ENCODE measurements at regions of chr2 and their contacts with region 1.

Region 1: GRCh38 chr2:28392297-28393113 is at the start of gene FOSL2:
- DNase-seq: peak; percentile 97 to 98 (median 98)
- ATAC-seq: peak; percentile 66 to 85 (median 74)
- H3K4me3 ChIP-seq: peak within 1 kb of the TSS; percentile 82 to 100 (median 96)
- H3K27ac ChIP-seq: peak within 1 kb of the TSS; percentile 94 to 100 (median 100)
- H3K4me1 ChIP-seq: peaks cover 7 to 35% (median 24%) of the 10 kb centered on the region in 12 donors
- H3K27me3 ChIP-seq: no peaks in the 10 kb centered on the region
- CTCF ChIP-seq: peak in 1 of 12 donors; percentile 12
- POLR2A ChIP-seq: peak; percentile 84 to 99
- total RNA-seq, gene FOSL2: 26.2 to 144 (median 50.2) TPM

Region 2: GRCh38 chr2:27735263-27735953 is 657.1 kb before region 1 on chr2:
- intact Hi-C with region 1: loop called in 1 of 10 experiments (anchors 1 kb)
- DNase-seq: peak; percentile 87 to 95 (median 89)
- ATAC-seq: peak; percentile 74 to 96 (median 94)
- H3K4me3 ChIP-seq: peak overlapping the region; percentile 29 to 68 (median 56)
- H3K27ac ChIP-seq: peak overlapping the region; percentile 60 to 94 (median 86)
- H3K4me1 ChIP-seq: peaks cover 14 to 47% (median 35%) of the 10 kb centered on the region in 12 donors
- H3K27me3 ChIP-seq: no peaks in the 10 kb centered on the region
- CTCF ChIP-seq: peak in 1 of 12 donors; percentile 16
- POLR2A ChIP-seq: peak in 1 of 2 donors; percentile 61

Region 3: DNA sequence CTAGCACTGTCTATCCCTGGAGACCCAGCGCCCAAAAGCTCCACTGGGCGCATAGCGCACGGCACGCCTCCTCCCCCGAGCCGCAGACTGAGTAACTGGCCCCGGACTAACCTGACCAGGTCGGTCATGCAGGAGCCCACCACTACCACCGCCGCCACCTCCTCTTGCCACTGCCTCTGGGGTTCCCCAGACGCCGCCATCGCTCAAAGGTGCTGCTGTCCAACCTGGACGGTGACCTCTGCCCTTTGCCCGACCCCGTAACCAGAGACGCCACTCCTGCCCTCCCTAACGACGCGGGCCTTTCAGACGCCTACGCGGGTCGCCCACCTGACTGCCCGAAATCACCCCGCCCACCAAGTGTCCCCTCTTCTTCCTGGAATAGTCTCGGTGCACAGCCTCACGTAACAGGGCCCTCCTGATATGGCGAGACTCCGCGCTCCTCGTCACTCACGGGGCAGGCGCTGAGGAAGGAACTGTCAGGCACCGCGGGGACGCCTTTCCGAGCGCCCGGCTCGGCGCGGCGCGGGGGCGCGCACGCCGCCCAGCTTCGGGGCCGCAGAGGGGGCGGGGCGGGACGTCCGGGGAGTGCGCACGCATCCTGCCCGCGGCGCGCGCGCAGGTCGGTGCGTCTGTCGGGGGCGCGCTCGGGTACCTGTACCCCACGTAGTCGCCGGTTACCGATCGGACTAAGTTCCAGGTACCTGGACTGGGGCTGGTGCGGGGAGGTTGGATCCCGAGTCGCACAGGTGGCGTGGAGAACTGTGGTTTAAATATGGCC is 502.2 kb before region 1 on chr2 and contains the starts of genes BABAM2 and RBKS:
- intact Hi-C with region 1: loop called in 8 of 10 experiments (anchors 1 to 5 kb)
- DNase-seq: peak; percentile 87 to 93 (median 91)
- ATAC-seq: peak; percentile 87 to 98 (median 94)
- H3K4me3 ChIP-seq: peak within 1 kb of the TSS; percentile 57 to 94 (median 80)
- H3K27ac ChIP-seq: peak within 1 kb of the TSS; percentile 85 to 99 (median 94)
- H3K4me1 ChIP-seq: peaks cover 0 to 54% (median 22%) of the 10 kb centered on the region in 12 donors
- H3K27me3 ChIP-seq: no peaks in the 10 kb centered on the region
- CTCF ChIP-seq: peak in 1 of 12 donors; percentile 9
- POLR2A ChIP-seq: peak in 1 of 2 donors; percentile 72
- total RNA-seq, gene BABAM2: 55.1 to 75.1 (median 64.4) TPM
- total RNA-seq, gene RBKS: 2.0 to 6.0 (median 4.1) TPM

Region 4: GRCh38 chr2:28096421-28096820 is 296.1 kb before region 1 on chr2:
- intact Hi-C with region 1: loop called in 6 of 10 experiments (anchors 2 to 5 kb)
- DNase-seq: no peak
- ATAC-seq: no peak
- H3K4me3 ChIP-seq: no peak overlapping the region
- H3K27ac ChIP-seq: peak overlapping the region in 1 of 12 donors; percentile 32
- H3K4me1 ChIP-seq: peaks cover 0 to 45% (median 6%) of the 10 kb centered on the region in 12 donors
- H3K27me3 ChIP-seq: no peaks in the 10 kb centered on the region
- CTCF ChIP-seq: no peak
- POLR2A ChIP-seq: no peak

Region 5: DNA sequence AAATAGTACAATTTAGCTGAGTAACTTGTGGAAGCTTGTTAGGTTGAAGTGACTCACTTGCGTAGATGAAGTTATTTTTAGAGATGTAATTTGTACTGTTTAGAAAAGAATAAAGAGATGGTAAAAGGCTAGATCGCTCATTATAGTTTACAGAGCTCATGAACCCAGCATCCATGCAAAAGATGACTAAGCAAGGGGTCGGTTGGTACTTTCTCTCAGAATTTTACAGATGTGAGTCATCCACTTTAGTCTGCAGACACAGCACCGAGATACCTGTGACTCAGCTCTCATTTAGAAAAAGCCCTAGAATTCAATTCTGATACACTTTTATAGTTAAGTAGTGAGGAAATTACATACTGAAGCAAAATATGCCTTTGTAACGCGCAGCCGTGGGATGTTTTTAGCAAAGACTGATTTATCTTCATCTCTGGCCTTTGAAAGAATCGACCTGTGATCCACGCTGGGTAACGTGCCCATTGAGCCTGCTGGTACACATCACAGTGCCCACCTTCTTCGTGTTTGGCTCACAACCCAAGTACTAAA is 116.4 kb before region 1 on chr2:
- intact Hi-C with region 1: loop called in 6 of 10 experiments (anchors 5 to 10 kb)
- DNase-seq: no peak
- ATAC-seq: peak in 3 of 4 donors; percentile 5 to 38 (median 11)
- H3K4me3 ChIP-seq: no peak overlapping the region
- H3K27ac ChIP-seq: peak overlapping the region in 6 of 12 donors; percentile 0 to 75 (median 56)
- H3K4me1 ChIP-seq: peaks cover 0 to 47% (median 21%) of the 10 kb centered on the region in 12 donors
- H3K27me3 ChIP-seq: no peaks in the 10 kb centered on the region
- CTCF ChIP-seq: no peak
- POLR2A ChIP-seq: no peak

Region 6: DNA sequence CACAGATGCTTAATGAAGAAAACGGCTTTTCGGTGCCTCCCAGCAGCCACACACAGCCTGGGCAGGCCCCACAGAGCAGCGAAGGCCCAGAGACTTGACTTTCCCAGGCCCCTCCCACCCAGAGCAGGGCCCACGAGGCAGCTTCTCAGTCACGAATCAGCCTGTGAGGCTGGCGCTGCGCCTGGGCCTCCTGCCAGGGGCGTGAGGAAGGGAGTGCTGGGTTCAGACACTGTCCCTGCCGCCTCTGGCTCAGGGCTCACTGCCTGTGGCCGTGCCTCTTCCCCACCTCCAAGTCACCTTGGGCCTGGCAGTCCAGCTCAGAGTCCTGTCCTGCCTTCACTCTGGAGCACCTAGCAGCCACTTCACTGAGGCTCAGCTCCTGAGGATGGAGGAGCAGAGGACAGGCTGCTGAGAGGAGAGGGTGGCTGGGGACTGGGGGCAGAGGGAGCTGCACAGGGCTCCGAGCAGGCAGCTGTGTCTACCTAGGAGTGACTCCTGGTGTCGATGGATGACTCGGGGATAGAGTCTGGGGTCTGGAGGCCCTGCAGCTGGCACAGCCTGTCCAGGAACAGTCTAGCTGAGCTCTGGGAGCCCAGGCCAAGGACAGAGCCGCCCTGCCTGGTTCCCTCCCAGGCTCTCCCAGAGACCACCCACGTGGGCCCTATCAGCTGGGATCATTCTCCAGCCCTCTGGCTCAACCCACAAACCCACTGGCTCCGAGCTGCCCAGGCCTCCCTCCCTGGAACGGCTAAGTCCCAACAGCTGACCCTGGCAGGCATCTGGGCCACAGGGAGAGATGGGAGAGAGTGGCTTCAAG is 36.2 kb before region 1 on chr2:
- intact Hi-C with region 1: loop called in 4 of 10 experiments (anchors 1 to 5 kb)
- DNase-seq: peak; percentile 91 to 97 (median 95)
- ATAC-seq: peak; percentile 93 to 97 (median 94)
- H3K4me3 ChIP-seq: no peak overlapping the region
- H3K27ac ChIP-seq: peak overlapping the region; percentile 70 to 98 (median 91)
- H3K4me1 ChIP-seq: peaks cover 9 to 54% (median 20%) of the 10 kb centered on the region in 12 donors
- H3K27me3 ChIP-seq: no peaks in the 10 kb centered on the region
- CTCF ChIP-seq: no peak
- POLR2A ChIP-seq: peak in 1 of 2 donors; percentile 16

Region 7: GRCh38 chr2:28437151-28437811 is 44.8 kb after region 1 on chr2:
- intact Hi-C with region 1: no loop called
- DNase-seq: no peak
- ATAC-seq: peak in 1 of 4 donors; percentile 21
- H3K4me3 ChIP-seq: no peak overlapping the region
- H3K27ac ChIP-seq: no peak overlapping the region
- H3K4me1 ChIP-seq: peaks cover 0 to 14% (median 0%) of the 10 kb centered on the region in 12 donors
- H3K27me3 ChIP-seq: no peaks in the 10 kb centered on the region
- CTCF ChIP-seq: no peak
- POLR2A ChIP-seq: no peak